ENCODE measurements at regions of chr10 and their contacts with region 1.

Region 1: GRCh38 chr10:49726593-49726992 is 35.5 kb downstream of the OGDHL start:
- DNase-seq: no peak
- H3K4me3 ChIP-seq: no peak overlapping the region
- H3K27ac ChIP-seq: no peak overlapping the region
- H3K4me1 ChIP-seq: no peaks in the 10 kb centered on the region
- H3K27me3 ChIP-seq: no peaks in the 10 kb centered on the region
- CTCF ChIP-seq: no peak
- POLR2A ChIP-seq: no peak

Region 2: GRCh38 chr10:49713266-49713665 is 13.3 kb before region 1 on chr10:
- intact Hi-C with region 1: loop called (anchors 2 kb)
- DNase-seq: no peak
- H3K4me3 ChIP-seq: no peak overlapping the region
- H3K27ac ChIP-seq: no peak overlapping the region
- H3K4me1 ChIP-seq: no peaks in the 10 kb centered on the region
- H3K27me3 ChIP-seq: no peaks in the 10 kb centered on the region
- CTCF ChIP-seq: no peak
- POLR2A ChIP-seq: no peak